Caco-2 (cell line): ENCODE measurements at regions of chr17 and their contacts with region 1.

Region 1: GRCh38 chr17:40443583-40444327 is 505 bp downstream of the IGFBP4 start:
- DNase-seq: peak; percentile 81 to 89
- H3K4me3 ChIP-seq: peak overlapping the region; percentile 61
- H3K4me3 Mint-ChIP-seq: peak overlapping the region; percentile 26
- H3K27ac Mint-ChIP-seq: no peak overlapping the region
- H3K4me1 ChIP-seq: peaks cover 14% of the 10 kb centered on the region
- H3K4me1 Mint-ChIP-seq: peaks cover 20% of the 10 kb centered on the region
- H3K27me3 ChIP-seq: no peaks in the 10 kb centered on the region
- H3K27me3 Mint-ChIP-seq: no peaks in the 10 kb centered on the region
- CTCF ChIP-seq: peak; percentile 40 to 78

Region 2: DNA sequence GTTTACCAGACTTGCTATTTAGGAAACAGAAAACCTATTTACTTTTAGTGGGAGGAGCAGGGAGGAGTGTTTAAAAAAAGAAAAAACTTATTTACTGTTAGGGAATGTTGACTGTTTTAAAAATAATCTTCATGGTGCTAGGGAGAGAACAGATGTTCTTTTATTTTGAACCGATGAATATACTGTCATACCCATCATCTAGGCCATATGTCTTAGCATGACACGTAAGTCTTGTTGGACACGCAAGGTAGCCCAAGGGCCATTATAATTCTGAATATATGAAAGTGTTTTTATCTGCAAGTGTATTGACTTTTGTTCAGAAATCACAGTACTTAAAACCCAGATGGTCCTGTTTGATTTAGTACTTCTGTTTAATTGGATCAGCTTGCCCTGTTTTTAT is 213.1 kb before region 1 on chr17:
- CTCF ChIA-PET with region 1: no interaction called
- POLR2A ChIA-PET with region 1: no interaction called
- intact Hi-C with region 1: no loop called
- DNase-seq: no peak
- H3K4me3 ChIP-seq: no peak overlapping the region
- H3K4me3 Mint-ChIP-seq: no peak overlapping the region
- H3K27ac Mint-ChIP-seq: no peak overlapping the region
- H3K4me1 ChIP-seq: no peaks in the 10 kb centered on the region
- H3K4me1 Mint-ChIP-seq: no peaks in the 10 kb centered on the region
- H3K27me3 ChIP-seq: no peaks in the 10 kb centered on the region
- H3K27me3 Mint-ChIP-seq: no peaks in the 10 kb centered on the region
- CTCF ChIP-seq: no peak

Region 3: GRCh38 chr17:40417609-40418427 is 25.9 kb before region 1 on chr17 and contains the start of gene TOP2A:
- CTCF ChIA-PET with region 1: interaction called, 18 read pairs
- POLR2A ChIA-PET with region 1: interaction called, 16 read pairs
- intact Hi-C with region 1: no loop called
- DNase-seq: peak; percentile 99 to 100
- H3K4me3 ChIP-seq: peak within 1 kb of the TSS; percentile 89
- H3K4me3 Mint-ChIP-seq: peak within 1 kb of the TSS; percentile 99
- H3K27ac Mint-ChIP-seq: peak within 1 kb of the TSS; percentile 99
- H3K4me1 ChIP-seq: peaks cover 16% of the 10 kb centered on the region; the same call in 1 of the 2 replicates
- H3K4me1 Mint-ChIP-seq: no peaks in the 10 kb centered on the region
- H3K27me3 ChIP-seq: no peaks in the 10 kb centered on the region
- H3K27me3 Mint-ChIP-seq: no peaks in the 10 kb centered on the region
- CTCF ChIP-seq: no peak
- total RNA-seq, gene TOP2A: 226 and 237 TPM in 2 replicates

Region 4: DNA sequence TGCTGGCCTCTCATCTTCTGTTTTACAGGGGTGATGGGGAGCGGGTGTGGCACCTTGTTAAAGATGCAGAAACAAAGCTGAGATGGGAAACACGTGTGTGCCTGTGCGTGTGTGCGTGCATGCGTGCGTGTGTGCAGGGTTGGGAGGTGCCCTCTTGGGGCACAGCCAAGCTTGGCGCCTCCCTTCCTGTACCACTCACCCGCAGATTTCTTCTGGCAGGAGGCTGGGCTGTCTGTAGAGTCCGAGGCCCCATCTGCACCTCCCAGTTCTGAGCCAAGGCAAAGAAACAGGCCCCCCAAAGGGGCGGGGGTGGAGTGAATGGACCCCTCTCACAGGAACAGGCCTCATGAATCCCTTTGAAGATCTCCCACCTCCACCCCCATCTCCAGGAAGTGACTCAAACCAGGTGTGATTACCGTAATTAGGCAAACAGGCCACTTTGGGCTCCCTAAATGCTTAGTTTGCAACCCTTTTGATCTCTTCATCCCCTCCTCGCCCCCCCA is 36.8 kb after region 1 on chr17:
- CTCF ChIA-PET with region 1: interaction called, 28 read pairs
- POLR2A ChIA-PET with region 1: no interaction called
- intact Hi-C with region 1: loop called (anchors 1 kb)
- DNase-seq: no peak
- H3K4me3 ChIP-seq: no peak overlapping the region
- H3K4me3 Mint-ChIP-seq: no peak overlapping the region
- H3K27ac Mint-ChIP-seq: no peak overlapping the region
- H3K4me1 ChIP-seq: peaks cover 10% of the 10 kb centered on the region; the same call in 1 of the 2 replicates
- H3K4me1 Mint-ChIP-seq: peaks cover 7% of the 10 kb centered on the region
- H3K27me3 ChIP-seq: no peaks in the 10 kb centered on the region
- H3K27me3 Mint-ChIP-seq: no peaks in the 10 kb centered on the region
- CTCF ChIP-seq: no peak